A549 (cell line): ENCODE measurements at regions of chr19 and their contacts with region 1.

Region 1: GRCh38 chr19:6530386-6531161 is at the start of gene TNFSF9:
- DNase-seq: peak; percentile 85 to 87
- ATAC-seq: peak; percentile 81 to 86
- H3K4me3 ChIP-seq: peak within 1 kb of the TSS; percentile 76
- H3K27ac ChIP-seq: peak within 1 kb of the TSS; percentile 98 to 99
- H3K4me1 ChIP-seq: peaks cover 32% of the 10 kb centered on the region
- CTCF ChIP-seq: no peak
- EP300 ChIP-seq: no peak
- POLR2A ChIP-seq: peak; percentile 91
- RAD21 ChIP-seq: no peak
- polyA plus RNA-seq, gene TNFSF9: 5.4 and 6.3 TPM in 2 replicates

Region 2: DNA sequence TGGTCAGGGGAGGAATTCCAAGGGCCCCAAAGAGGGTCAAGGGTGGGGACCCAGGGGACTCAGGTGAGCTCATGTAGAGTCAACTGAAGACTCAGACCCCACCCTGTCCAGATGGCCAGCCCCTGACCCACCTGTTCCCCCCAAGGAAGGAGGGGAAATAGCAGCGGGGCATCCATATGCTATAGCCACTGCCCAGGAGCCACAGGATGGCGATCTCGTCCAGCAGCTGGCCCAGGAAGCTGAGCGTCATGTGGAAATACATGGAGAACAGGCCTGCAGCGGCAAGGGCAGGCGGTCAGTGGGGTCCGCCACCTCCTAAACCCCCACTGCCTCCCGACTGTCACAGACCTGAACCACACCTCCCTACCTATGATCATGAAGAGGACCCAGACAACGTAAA is 218.6 kb before region 1 on chr19:
- CTCF ChIA-PET with region 1: no interaction called
- POLR2A ChIA-PET with region 1: no interaction called
- DNase-seq: no peak
- ATAC-seq: peak; percentile 34 to 44; a peak in 3 of 6 replicates
- H3K4me3 ChIP-seq: no peak overlapping the region
- H3K27ac ChIP-seq: no peak overlapping the region
- H3K4me1 ChIP-seq: no peaks in the 10 kb centered on the region
- CTCF ChIP-seq: no peak
- EP300 ChIP-seq: no peak
- POLR2A ChIP-seq: no peak
- RAD21 ChIP-seq: peak in 1 of 2 experiments; percentile 21; a peak in 1 of 5 replicates

Region 3: DNA sequence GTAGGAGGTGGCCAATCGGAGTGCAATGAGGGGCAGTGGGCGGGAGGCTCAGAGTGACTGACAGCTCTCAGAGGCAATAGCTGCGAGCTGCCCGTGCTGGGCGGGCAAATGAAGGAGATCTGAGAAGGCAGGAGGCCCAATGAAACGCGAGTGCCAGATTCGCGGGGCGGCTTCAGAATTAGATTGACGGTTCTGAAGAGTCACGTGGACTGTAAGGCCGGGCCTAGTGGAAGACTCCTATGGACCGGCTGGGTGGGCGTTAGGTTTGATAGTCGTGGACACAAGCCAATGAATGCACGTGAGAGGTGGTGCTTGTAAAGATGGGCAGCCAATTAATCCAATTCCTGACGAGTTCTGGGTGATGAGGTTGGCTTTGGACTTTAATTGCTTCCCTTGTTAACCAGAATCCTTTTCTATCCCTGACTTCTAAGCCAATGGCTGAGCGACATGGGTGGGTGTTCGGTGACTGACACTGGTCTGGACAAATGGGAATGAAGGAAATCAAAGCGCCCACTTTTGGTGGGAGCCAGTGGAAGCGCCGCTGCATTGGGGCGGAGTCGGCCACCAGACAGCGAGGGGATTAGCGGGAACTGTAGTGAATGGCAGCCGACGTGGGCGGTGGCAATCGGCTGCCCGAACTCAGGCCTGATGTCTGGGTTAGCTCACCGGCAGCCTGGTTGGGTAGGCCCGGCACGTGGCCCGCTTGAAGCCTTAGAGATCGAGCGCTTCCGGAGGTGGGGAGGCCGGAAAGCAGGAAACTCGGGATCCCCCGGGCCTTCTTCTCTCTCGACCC is 105.4 kb before region 1 on chr19:
- CTCF ChIA-PET with region 1: no interaction called
- POLR2A ChIA-PET with region 1: no interaction called
- DNase-seq: peak; percentile 97 to 100
- ATAC-seq: peak; percentile 95 to 96
- H3K4me3 ChIP-seq: peak overlapping the region; percentile 15; the same call in 2 of the 3 replicates
- H3K27ac ChIP-seq: peak overlapping the region; percentile 68 to 87
- H3K4me1 ChIP-seq: peaks cover 15% of the 10 kb centered on the region; the same call in 2 of the 3 replicates
- CTCF ChIP-seq: no peak
- EP300 ChIP-seq: no peak
- POLR2A ChIP-seq: peak; percentile 17; the same call in 1 of the 2 replicates
- RAD21 ChIP-seq: no peak

Region 4: DNA sequence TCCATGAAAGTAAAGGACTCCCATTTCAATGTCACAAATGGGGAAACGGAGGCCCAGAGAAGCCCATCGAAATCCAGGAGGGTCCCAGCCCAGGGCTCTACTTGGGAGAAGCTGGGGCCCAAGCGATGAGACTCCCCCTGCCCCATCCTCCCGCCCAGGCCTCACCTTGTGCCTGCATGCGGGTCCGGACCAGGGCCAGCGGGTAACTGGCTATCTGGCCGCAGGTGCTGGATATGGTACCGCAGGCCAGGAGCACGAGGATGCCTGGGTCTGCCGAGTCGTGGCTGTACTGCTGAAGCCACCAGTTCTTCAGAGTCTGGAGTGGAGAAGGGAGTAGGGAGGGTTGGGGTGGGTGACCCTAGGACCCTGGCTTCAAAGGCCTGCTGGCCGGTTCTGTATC is 86.6 kb before region 1 on chr19:
- CTCF ChIA-PET with region 1: no interaction called
- POLR2A ChIA-PET with region 1: no interaction called
- DNase-seq: no peak
- ATAC-seq: no peak
- H3K4me3 ChIP-seq: no peak overlapping the region
- H3K27ac ChIP-seq: no peak overlapping the region
- H3K4me1 ChIP-seq: no peaks in the 10 kb centered on the region
- CTCF ChIP-seq: no peak
- EP300 ChIP-seq: no peak
- POLR2A ChIP-seq: no peak
- RAD21 ChIP-seq: no peak

Region 5: GRCh38 chr19:6501740-6502648 is 28.6 kb before region 1 on chr19 and contains the start of gene TUBB4A:
- CTCF ChIA-PET with region 1: no interaction called
- POLR2A ChIA-PET with region 1: no interaction called
- DNase-seq: peak in 1 of 2 experiments; percentile 54
- ATAC-seq: peak; percentile 74 to 80; a peak in 5 of 6 replicates
- H3K4me3 ChIP-seq: peak within 1 kb of the TSS; percentile 81
- H3K27ac ChIP-seq: peak within 1 kb of the TSS; percentile 79 to 94
- H3K4me1 ChIP-seq: peaks cover 5% of the 10 kb centered on the region; the same call in 2 of the 3 replicates
- CTCF ChIP-seq: no peak
- EP300 ChIP-seq: no peak
- POLR2A ChIP-seq: peak; percentile 28; the same call in 1 of the 2 replicates
- RAD21 ChIP-seq: no peak
- polyA plus RNA-seq, gene TUBB4A: 2.2 and 2.5 TPM in 2 replicates

Region 6: DNA sequence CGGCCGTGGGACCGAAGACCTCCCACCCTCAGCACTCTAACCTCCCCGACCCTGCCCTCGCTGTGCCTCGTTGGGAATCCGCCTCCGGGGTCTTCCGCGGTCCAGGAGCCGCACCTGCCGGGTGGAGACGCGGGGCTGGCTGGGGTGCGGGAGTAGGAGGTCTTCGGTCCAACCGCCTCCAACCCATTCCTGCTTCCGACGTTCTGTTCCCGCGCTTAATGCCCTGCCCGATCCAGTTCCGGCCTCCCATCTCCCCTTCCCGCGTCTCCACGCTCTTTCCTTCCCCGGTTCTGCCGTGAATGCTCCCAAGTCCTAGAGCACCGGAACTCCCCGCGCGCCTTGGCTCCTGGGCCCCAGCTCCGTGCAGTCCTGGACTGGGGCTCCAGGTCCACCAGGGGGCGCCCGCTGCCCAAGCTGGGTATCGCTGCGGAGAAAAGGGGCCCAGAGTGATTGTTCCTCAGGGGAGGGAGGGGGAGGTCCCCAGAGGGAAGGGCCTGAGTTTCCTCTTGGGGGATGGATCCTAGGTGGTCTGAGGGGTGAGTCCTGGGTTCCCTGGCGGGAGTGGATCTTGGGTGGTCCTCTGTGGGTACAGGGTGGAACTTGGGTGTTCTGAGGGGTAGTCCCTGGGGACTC is 13.8 kb before region 1 on chr19:
- CTCF ChIA-PET with region 1: interaction called, 3 read pairs
- POLR2A ChIA-PET with region 1: interaction called, 22 read pairs
- DNase-seq: peak; percentile 83 to 84
- ATAC-seq: peak; percentile 79 to 93
- H3K4me3 ChIP-seq: peak overlapping the region; percentile 58
- H3K27ac ChIP-seq: peak overlapping the region; percentile 51 to 93
- H3K4me1 ChIP-seq: peaks cover 46% of the 10 kb centered on the region
- CTCF ChIP-seq: peak; percentile 90
- EP300 ChIP-seq: no peak
- POLR2A ChIP-seq: no peak
- RAD21 ChIP-seq: peak; percentile 94

Region 7: DNA sequence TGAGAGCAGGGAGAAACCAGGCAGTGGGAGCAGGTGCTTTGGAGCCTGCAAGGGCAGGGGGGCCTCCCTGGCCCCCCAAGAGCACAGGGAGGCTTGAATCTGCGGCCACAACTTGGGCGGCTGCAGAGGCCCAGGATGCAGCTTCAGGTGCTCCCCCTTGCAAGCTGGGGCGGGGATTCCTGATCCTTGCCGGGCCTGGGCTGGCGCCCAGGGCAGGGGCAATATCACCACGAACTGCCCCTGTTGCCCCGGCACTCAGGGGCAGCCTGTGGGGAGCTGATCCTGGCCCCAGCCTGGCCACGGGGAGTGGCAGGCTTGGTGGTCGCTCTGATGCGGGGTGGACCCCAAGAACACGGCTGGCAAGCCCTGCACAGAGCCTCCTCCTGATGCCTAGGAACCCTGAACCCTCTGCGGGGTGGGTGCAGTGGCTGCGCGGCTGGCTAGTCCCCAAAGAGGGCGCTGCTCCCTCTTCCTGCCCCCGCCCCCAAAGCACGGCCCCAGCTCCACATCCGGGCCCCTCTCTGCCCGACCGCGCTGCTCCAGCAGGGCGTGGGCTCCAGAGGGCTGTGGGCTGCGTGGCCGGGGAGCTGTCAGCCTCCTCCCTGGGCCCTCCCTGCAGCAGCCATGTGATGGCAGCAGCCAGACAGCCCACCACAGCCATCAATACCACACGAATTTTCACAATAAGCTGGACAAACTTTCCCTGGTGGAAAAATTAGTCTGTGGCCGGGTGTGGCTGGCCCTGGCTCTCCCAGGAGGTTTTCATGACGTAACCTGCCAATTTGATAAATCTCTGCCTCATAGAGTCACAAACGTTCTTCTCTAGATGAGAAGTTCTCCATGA is 21.3 kb after region 1 on chr19:
- CTCF ChIA-PET with region 1: interaction called, 3 read pairs
- POLR2A ChIA-PET with region 1: interaction called, 13 read pairs
- DNase-seq: peak; percentile 61 to 64
- ATAC-seq: peak; percentile 94 to 98
- H3K4me3 ChIP-seq: no peak overlapping the region
- H3K27ac ChIP-seq: peak overlapping the region; percentile 61 to 81
- H3K4me1 ChIP-seq: peaks cover 11% of the 10 kb centered on the region
- CTCF ChIP-seq: peak; percentile 24; the same call in 2 of the 3 replicates
- EP300 ChIP-seq: no peak
- POLR2A ChIP-seq: 0 out of 2 replicates have a peak, but pooled peaks have one; percentile 13
- RAD21 ChIP-seq: 0 out of 5 replicates have a peak, but pooled peaks of 1 of the 2 experiments have one; percentile 23

Region 8: GRCh38 chr19:6580313-6580712 is 49.7 kb after region 1 on chr19:
- CTCF ChIA-PET with region 1: no interaction called
- POLR2A ChIA-PET with region 1: interaction called, 12 read pairs
- DNase-seq: peak; percentile 69 to 83
- ATAC-seq: peak; percentile 89 to 95
- H3K4me3 ChIP-seq: no peak overlapping the region
- H3K27ac ChIP-seq: peak overlapping the region; percentile 73 to 87
- H3K4me1 ChIP-seq: peaks cover 47% of the 10 kb centered on the region
- CTCF ChIP-seq: no peak
- EP300 ChIP-seq: no peak
- POLR2A ChIP-seq: no peak
- RAD21 ChIP-seq: no peak